Heart left ventricle (tissue), 16 donors: ENCODE measurements at regions of chr1 and their contacts with region 1.

Region 1: GRCh38 chr1:59947047-59947938 is 20.7 kb upstream of the CYP2J2 start:
- DNase-seq: peak in 4 of 5 donors; percentile 33 to 44 (median 40)
- ATAC-seq: peak; percentile 74 to 91 (median 88)
- H3K4me3 ChIP-seq: no peak overlapping the region
- H3K27ac ChIP-seq: no peak overlapping the region
- H3K4me1 ChIP-seq: peaks cover 0 to 13% (median 0%) of the 10 kb centered on the region in 12 donors
- H3K27me3 ChIP-seq: no peaks in the 10 kb centered on the region
- CTCF ChIP-seq: peak; percentile 76 to 93 (median 88)
- POLR2A ChIP-seq: no peak

Region 2: GRCh38 chr1:58515794-58516401 is 1431.4 kb before region 1 on chr1:
- intact Hi-C with region 1: loop called in 1 of 10 experiments (anchors 10 kb)
- DNase-seq: peak in 4 of 5 donors; percentile 20 to 35 (median 30)
- ATAC-seq: peak in 2 of 4 donors; percentile 39 to 72
- H3K4me3 ChIP-seq: no peak overlapping the region
- H3K27ac ChIP-seq: no peak overlapping the region
- H3K4me1 ChIP-seq: peaks cover 0 to 14% (median 0%) of the 10 kb centered on the region in 12 donors
- H3K27me3 ChIP-seq: no peaks in the 10 kb centered on the region
- CTCF ChIP-seq: peak; percentile 56 to 82 (median 72)
- POLR2A ChIP-seq: no peak

Region 3: GRCh38 chr1:58739856-58740466 is 1207.3 kb before region 1 on chr1:
- intact Hi-C with region 1: loop called in 1 of 10 experiments (anchors 10 kb)
- DNase-seq: peak in 1 of 5 donors; percentile 20
- ATAC-seq: peak in 1 of 4 donors; percentile 43
- H3K4me3 ChIP-seq: no peak overlapping the region
- H3K27ac ChIP-seq: no peak overlapping the region
- H3K4me1 ChIP-seq: peaks cover 0 to 21% (median 0%) of the 10 kb centered on the region in 12 donors
- H3K27me3 ChIP-seq: no peaks in the 10 kb centered on the region
- CTCF ChIP-seq: peak; percentile 72 to 92 (median 88)
- POLR2A ChIP-seq: no peak

Region 4: GRCh38 chr1:59879574-59879973 is 67.7 kb before region 1 on chr1:
- intact Hi-C with region 1: loop called (anchors 1 to 2 kb)
- DNase-seq: peak in 4 of 5 donors; percentile 41 to 78 (median 56)
- ATAC-seq: peak; percentile 67 to 93 (median 88)
- H3K4me3 ChIP-seq: no peak overlapping the region
- H3K27ac ChIP-seq: no peak overlapping the region
- H3K4me1 ChIP-seq: peaks cover 0 to 5% (median 0%) of the 10 kb centered on the region in 12 donors
- H3K27me3 ChIP-seq: no peaks in the 10 kb centered on the region
- CTCF ChIP-seq: peak; percentile 30 to 61 (median 50)
- POLR2A ChIP-seq: no peak

Region 5: DNA sequence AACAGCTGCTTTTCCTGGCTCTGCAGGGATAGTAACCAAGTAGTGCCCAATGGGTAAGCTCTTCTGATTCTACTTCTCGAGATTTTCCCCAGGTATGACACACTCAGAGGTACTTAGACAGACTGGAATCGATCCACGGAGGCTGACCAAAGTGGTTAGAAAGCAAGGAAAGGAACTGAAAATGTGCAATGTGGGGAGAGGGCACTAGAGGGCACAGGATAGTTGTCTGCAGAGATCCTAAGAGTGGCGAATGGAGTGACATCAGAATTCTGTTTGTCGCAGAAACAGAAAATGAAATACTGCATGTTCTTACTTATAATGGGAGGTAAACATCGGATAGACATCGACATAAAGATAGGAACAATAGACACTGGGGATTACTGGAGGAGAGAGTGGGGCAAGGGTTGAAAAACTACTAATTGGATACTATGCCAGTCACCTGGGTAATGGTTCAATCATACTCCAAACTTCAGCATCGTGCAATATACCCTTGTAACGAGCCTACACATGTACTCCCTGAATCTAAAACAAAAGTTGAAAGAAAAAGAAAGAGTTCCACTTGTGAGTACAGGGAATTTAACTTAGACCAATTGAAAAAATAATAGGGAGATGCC is 44.0 kb before region 1 on chr1:
- intact Hi-C with region 1: loop called in 1 of 10 experiments (anchors 5 kb)
- DNase-seq: no peak
- ATAC-seq: peak; percentile 30 to 57 (median 45)
- H3K4me3 ChIP-seq: no peak overlapping the region
- H3K27ac ChIP-seq: peak overlapping the region in 5 of 12 donors; percentile 0 to 45 (median 36)
- H3K4me1 ChIP-seq: peaks cover 0 to 50% (median 10%) of the 10 kb centered on the region in 12 donors
- H3K27me3 ChIP-seq: no peaks in the 10 kb centered on the region
- CTCF ChIP-seq: peak in 8 of 12 donors; percentile 16 to 41 (median 33)
- POLR2A ChIP-seq: no peak

Region 6: DNA sequence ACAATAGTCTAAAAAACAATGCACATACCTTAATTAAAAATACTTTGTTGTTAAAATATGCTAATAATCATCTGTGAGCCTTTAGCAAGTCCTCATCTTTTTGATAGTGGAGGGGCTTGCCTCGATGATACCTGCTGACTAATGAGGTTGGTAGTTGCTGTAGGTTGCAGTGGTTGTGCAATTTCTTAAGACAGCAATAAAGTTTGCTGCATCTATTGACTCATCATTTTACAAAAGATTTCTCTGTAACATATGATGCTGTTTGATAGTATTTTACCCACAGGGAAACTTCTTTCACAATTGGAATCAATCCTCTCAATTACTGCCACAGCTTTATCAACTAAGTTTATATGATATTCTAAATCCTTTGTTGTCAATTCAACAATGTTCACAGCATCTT is 118.7 kb after region 1 on chr1:
- intact Hi-C with region 1: no loop called
- DNase-seq: no peak
- ATAC-seq: no peak
- H3K4me3 ChIP-seq: no peak overlapping the region
- H3K27ac ChIP-seq: no peak overlapping the region
- H3K4me1 ChIP-seq: peaks cover 0 to 9% (median 0%) of the 10 kb centered on the region in 12 donors
- H3K27me3 ChIP-seq: no peaks in the 10 kb centered on the region
- CTCF ChIP-seq: no peak
- POLR2A ChIP-seq: no peak

Region 7: DNA sequence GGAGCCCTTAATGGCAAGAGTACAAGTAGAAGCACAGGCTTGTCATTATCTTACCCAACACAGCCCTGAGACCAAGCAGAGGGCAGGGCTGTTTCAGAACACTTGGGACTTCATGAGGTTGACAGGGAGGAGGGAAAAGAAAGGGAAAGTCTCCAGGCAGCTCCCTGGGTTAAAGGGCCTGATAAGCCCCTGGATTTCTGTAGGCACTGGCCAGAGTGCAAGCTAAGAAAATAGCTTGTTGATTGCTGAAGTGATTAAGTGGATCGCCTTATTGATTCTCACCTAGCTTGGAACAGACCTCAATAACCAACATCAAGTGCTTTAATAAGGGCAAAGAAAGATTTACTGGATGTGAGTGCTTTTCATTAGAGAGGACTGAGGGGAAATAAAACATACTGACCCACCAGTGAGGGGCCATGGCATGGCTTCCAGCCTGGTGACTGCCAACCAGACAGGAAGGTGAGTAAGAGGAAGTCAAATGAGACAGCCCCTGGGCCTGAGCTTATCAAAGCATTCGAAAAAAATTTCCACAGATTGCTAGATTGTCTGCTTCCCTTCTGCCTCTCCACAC is 1013.7 kb after region 1 on chr1:
- intact Hi-C with region 1: no loop called
- DNase-seq: no peak
- ATAC-seq: peak in 1 of 4 donors; percentile 22
- H3K4me3 ChIP-seq: no peak overlapping the region
- H3K27ac ChIP-seq: no peak overlapping the region
- H3K4me1 ChIP-seq: no peaks in the 10 kb centered on the region
- H3K27me3 ChIP-seq: no peaks in the 10 kb centered on the region
- CTCF ChIP-seq: no peak
- POLR2A ChIP-seq: no peak